ENCODE measurements at regions of chr5 and their contacts with region 1.

Region 1: GRCh38 chr5:43729846-43730478 is 127.0 kb downstream of the NNT start:
- DNase-seq: no peak
- ATAC-seq: no peak
- H3K4me3 ChIP-seq: no peak overlapping the region
- H3K27ac ChIP-seq: no peak overlapping the region
- H3K4me1 ChIP-seq: no peaks in the 10 kb centered on the region
- H3K27me3 ChIP-seq: no peaks in the 10 kb centered on the region
- CTCF ChIP-seq: peak; percentile 31 to 80 (median 62)

Region 2: GRCh38 chr5:43582082-43583005 is 147.6 kb before region 1 on chr5:
- intact Hi-C with region 1: no loop called
- DNase-seq: no peak
- ATAC-seq: no peak
- H3K4me3 ChIP-seq: no peak overlapping the region
- H3K27ac ChIP-seq: no peak overlapping the region
- H3K4me1 ChIP-seq: no peaks in the 10 kb centered on the region
- H3K27me3 ChIP-seq: no peaks in the 10 kb centered on the region
- CTCF ChIP-seq: no peak

Region 3: GRCh38 chr5:43802119-43802518 is 72.2 kb after region 1 on chr5:
- intact Hi-C with region 1: no loop called
- DNase-seq: no peak
- ATAC-seq: no peak
- H3K4me3 ChIP-seq: no peak overlapping the region
- H3K27ac ChIP-seq: no peak overlapping the region
- H3K4me1 ChIP-seq: no peaks in the 10 kb centered on the region
- H3K27me3 ChIP-seq: no peaks in the 10 kb centered on the region
- CTCF ChIP-seq: no peak

Region 4: GRCh38 chr5:44011518-44011917 is 281.6 kb after region 1 on chr5:
- intact Hi-C with region 1: no loop called
- DNase-seq: no peak
- ATAC-seq: no peak
- H3K4me3 ChIP-seq: no peak overlapping the region
- H3K27ac ChIP-seq: no peak overlapping the region
- H3K4me1 ChIP-seq: no peaks in the 10 kb centered on the region
- H3K27me3 ChIP-seq: no peaks in the 10 kb centered on the region
- CTCF ChIP-seq: no peak

Region 5: GRCh38 chr5:44332285-44332971 is 602.5 kb after region 1 on chr5:
- intact Hi-C with region 1: loop called in 9 of 10 experiments (anchors 1 to 5 kb)
- DNase-seq: no peak
- ATAC-seq: peak in 2 of 8 donors; percentile 31 to 60
- H3K4me3 ChIP-seq: no peak overlapping the region
- H3K27ac ChIP-seq: no peak overlapping the region
- H3K4me1 ChIP-seq: no peaks in the 10 kb centered on the region
- H3K27me3 ChIP-seq: no peaks in the 10 kb centered on the region
- CTCF ChIP-seq: peak; percentile 30 to 72 (median 61)

Region 6: GRCh38 chr5:44412286-44412685 is 682.3 kb after region 1 on chr5:
- intact Hi-C with region 1: no loop called
- DNase-seq: no peak
- ATAC-seq: no peak
- H3K4me3 ChIP-seq: no peak overlapping the region
- H3K27ac ChIP-seq: no peak overlapping the region
- H3K4me1 ChIP-seq: no peaks in the 10 kb centered on the region
- H3K27me3 ChIP-seq: no peaks in the 10 kb centered on the region
- CTCF ChIP-seq: no peak

Region 7: GRCh38 chr5:44783634-44784315 is 1053.8 kb after region 1 on chr5:
- intact Hi-C with region 1: loop called in 4 of 10 experiments (anchors 5 to 10 kb)
- DNase-seq: no peak
- ATAC-seq: no peak
- H3K4me3 ChIP-seq: no peak overlapping the region
- H3K27ac ChIP-seq: no peak overlapping the region
- H3K4me1 ChIP-seq: no peaks in the 10 kb centered on the region
- H3K27me3 ChIP-seq: no peaks in the 10 kb centered on the region
- CTCF ChIP-seq: no peak